Calu3 (cell line): ENCODE measurements at regions of chr3 and their contacts with region 1.

Region 1: DNA sequence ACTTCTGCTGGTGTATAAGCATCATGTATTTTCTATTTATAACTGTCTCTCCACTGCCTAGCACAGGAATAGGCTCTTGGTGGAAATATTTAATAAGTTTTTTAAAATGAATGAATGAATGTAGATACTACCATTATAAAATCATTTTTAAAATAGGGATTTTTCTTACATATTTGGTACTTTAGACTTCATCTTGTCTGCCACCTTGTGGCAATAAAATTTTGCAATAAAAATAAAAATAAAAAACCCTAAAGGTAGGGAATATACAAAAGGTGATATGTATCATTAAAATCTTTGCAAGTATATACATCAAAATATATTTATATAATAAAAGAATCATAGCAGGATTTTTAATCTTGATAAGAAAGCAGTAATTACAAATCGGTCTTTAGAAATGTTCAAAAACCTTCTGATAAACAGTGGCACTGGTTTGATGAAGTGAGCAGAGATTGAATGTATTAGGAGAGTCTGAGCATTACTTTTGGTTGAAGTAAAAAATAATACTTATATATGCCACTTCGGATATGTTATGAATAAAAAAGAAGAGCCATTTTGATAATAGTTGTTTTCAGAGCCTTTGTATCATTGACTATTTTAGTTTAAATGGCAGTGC is 95.2 kb downstream of the SPATA16 start:
- DNase-seq: no peak
- H3K4me3 Mint-ChIP-seq: no peak overlapping the region
- H3K27ac Mint-ChIP-seq: no peak overlapping the region
- H3K4me1 Mint-ChIP-seq: no peaks in the 10 kb centered on the region
- H3K27me3 Mint-ChIP-seq: no peaks in the 10 kb centered on the region
- CTCF ChIP-seq: peak; percentile 50

Region 2: GRCh38 chr3:172808969-172809546 is 236.8 kb before region 1 on chr3:
- CTCF ChIA-PET with region 1: no interaction called
- intact Hi-C with region 1: loop called (anchors 1 kb)
- DNase-seq: no peak
- H3K4me3 Mint-ChIP-seq: no peak overlapping the region
- H3K27ac Mint-ChIP-seq: no peak overlapping the region
- H3K4me1 Mint-ChIP-seq: no peaks in the 10 kb centered on the region
- H3K27me3 Mint-ChIP-seq: no peaks in the 10 kb centered on the region
- CTCF ChIP-seq: peak; percentile 39

Region 3: GRCh38 chr3:172836390-172836997 is 209.4 kb before region 1 on chr3:
- CTCF ChIA-PET with region 1: interaction called, 6 read pairs
- intact Hi-C with region 1: loop called (anchors 1 kb)
- DNase-seq: peak; percentile 77
- H3K4me3 Mint-ChIP-seq: no peak overlapping the region
- H3K27ac Mint-ChIP-seq: no peak overlapping the region
- H3K4me1 Mint-ChIP-seq: no peaks in the 10 kb centered on the region
- H3K27me3 Mint-ChIP-seq: peaks cover 17% of the 10 kb centered on the region
- CTCF ChIP-seq: peak; percentile 84

Region 4: GRCh38 chr3:172885704-172886103 is 160.2 kb before region 1 on chr3:
- CTCF ChIA-PET with region 1: no interaction called
- intact Hi-C with region 1: loop called (anchors 1 kb)
- DNase-seq: peak; percentile 20
- H3K4me3 Mint-ChIP-seq: no peak overlapping the region
- H3K27ac Mint-ChIP-seq: no peak overlapping the region
- H3K4me1 Mint-ChIP-seq: no peaks in the 10 kb centered on the region
- H3K27me3 Mint-ChIP-seq: no peaks in the 10 kb centered on the region
- CTCF ChIP-seq: no peak

Region 5: GRCh38 chr3:172939651-172940293 is 106.1 kb before region 1 on chr3:
- CTCF ChIA-PET with region 1: no interaction called
- intact Hi-C with region 1: no loop called
- DNase-seq: no peak
- H3K4me3 Mint-ChIP-seq: no peak overlapping the region
- H3K27ac Mint-ChIP-seq: no peak overlapping the region
- H3K4me1 Mint-ChIP-seq: peaks cover 30% of the 10 kb centered on the region
- H3K27me3 Mint-ChIP-seq: no peaks in the 10 kb centered on the region
- CTCF ChIP-seq: no peak

Region 6: DNA sequence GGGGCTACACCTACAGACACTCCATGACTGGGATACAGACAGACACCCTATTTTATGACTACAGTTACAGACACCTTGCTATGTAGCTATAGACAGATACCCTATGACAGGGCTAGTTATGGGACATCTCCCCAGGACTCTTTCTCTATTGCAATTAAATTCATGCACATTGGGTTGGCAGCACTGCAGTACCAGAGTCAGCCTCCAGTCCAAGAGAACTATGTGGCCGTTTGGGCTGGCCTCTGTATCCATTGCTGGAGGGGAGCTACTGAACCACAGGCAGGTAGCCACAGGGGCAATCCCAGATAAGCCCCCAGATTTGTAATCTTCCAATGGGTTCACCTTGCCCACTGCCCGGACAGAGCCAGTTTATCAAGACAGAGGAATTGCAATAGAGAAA is 203.6 kb after region 1 on chr3:
- CTCF ChIA-PET with region 1: interaction called, 10 read pairs
- intact Hi-C with region 1: no loop called
- DNase-seq: no peak
- H3K4me3 Mint-ChIP-seq: no peak overlapping the region
- H3K27ac Mint-ChIP-seq: no peak overlapping the region
- H3K4me1 Mint-ChIP-seq: no peaks in the 10 kb centered on the region
- H3K27me3 Mint-ChIP-seq: no peaks in the 10 kb centered on the region
- CTCF ChIP-seq: peak; percentile 12

Region 7: GRCh38 chr3:173275740-173276139 is 229.9 kb after region 1 on chr3:
- CTCF ChIA-PET with region 1: no interaction called
- intact Hi-C with region 1: no loop called
- DNase-seq: no peak
- H3K4me3 Mint-ChIP-seq: no peak overlapping the region
- H3K27ac Mint-ChIP-seq: no peak overlapping the region
- H3K4me1 Mint-ChIP-seq: peaks cover 2% of the 10 kb centered on the region
- H3K27me3 Mint-ChIP-seq: no peaks in the 10 kb centered on the region
- CTCF ChIP-seq: no peak